Posterior vena cava (tissue), 2 donors: ENCODE measurements at regions of chr16 and their contacts with region 1.

Region 1: DNA sequence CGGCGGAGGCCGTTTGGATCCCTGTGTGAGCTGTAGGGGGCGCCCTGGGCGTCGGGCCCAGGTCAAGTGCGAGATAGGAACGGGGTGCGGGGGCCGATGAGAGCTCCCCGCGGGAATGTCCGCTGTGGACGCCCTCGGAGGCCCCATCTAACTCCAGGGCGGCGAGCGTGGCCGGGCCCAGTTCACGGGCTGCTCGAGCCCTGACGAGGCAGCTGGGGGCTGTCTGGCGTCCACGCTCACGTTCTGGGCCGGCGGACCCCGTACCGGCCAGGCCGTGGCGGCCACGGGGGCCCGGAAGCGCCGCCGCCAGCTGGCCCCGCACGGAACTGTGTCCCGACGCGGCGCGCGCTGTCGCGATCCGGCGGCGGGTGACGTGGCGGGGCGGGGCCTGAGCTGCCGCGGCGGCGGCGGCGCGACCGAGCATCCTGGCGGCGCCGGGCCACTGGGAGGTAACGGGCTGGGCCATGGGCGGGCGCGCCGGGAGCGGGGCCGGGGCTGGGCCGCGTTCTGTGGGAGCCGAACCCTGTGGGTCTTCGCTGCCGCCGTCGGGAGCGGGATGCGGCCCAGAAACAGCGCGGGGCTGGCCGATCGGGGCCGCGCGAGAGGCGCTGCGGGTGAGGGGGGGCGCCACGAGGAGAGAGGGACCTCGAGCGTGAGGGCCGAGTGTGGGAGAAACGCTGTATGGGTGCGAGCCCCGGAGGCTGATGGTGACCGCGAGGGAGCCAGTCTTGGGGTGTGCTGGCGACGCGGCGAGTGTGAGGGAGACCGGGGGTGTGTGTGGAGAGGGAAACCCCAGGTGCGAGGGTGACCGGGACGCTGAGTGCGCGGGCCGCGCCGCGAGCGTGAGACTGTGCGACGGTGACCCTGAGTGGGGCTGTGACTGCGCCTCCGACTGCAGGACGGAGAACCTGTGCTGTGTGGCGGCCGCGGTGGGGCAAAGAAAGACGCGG is at the start of gene SLC7A6:
- DNase-seq: peak; percentile 93
- total RNA-seq, gene SLC7A6: 28.4 to 39.7 TPM

Region 2: GRCh38 chr16:68328151-68328859 is 63.9 kb after region 1 on chr16:
- intact Hi-C with region 1: loop called (anchors 2 to 5 kb)
- DNase-seq: peak; percentile 91